ENCODE measurements at regions of chr4 and their contacts with region 1.

Region 1: GRCh38 chr4:81471588-81472288 is at the start of gene RASGEF1B:
- DNase-seq: peak; percentile 96
- H3K4me3 Mint-ChIP-seq: peak within 1 kb of the TSS; percentile 88
- H3K27ac Mint-ChIP-seq: peak within 1 kb of the TSS; percentile 78
- H3K4me1 Mint-ChIP-seq: peaks cover 32% of the 10 kb centered on the region
- H3K27me3 Mint-ChIP-seq: no peaks in the 10 kb centered on the region
- total RNA-seq, gene RASGEF1B: 4.4 to 4.6 TPM

Region 2: GRCh38 chr4:80713409-80713808 is 758.3 kb before region 1 on chr4:
- CTCF ChIA-PET with region 1: no interaction called
- POLR2A ChIA-PET with region 1: no interaction called
- intact Hi-C with region 1: no loop called
- DNase-seq: no peak
- H3K4me3 Mint-ChIP-seq: no peak overlapping the region
- H3K27ac Mint-ChIP-seq: no peak overlapping the region
- H3K4me1 Mint-ChIP-seq: peaks cover 11% of the 10 kb centered on the region
- H3K27me3 Mint-ChIP-seq: no peaks in the 10 kb centered on the region

Region 3: DNA sequence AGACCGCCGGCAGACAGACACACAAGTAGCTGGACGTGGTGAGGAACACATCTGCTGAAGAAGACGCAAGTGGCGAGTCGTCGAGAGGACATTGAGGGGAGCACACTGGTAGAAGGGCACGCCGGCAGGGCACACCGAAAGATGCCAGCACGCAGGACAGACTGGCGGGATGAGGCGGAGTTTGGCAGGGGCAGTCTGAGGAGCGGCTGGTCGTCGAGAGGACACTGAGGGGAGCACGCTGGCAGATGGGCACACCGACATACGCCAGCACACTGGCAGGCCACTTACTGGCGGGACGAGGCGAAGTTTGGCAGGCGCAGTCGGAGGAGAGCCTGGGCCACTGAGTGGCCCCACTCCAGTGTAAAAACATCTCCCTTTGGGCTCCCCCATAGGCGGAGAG is 42.1 kb before region 1 on chr4:
- CTCF ChIA-PET with region 1: no interaction called
- POLR2A ChIA-PET with region 1: no interaction called
- intact Hi-C with region 1: no loop called
- DNase-seq: no peak
- H3K4me3 Mint-ChIP-seq: no peak overlapping the region
- H3K27ac Mint-ChIP-seq: no peak overlapping the region
- H3K4me1 Mint-ChIP-seq: no peaks in the 10 kb centered on the region
- H3K27me3 Mint-ChIP-seq: no peaks in the 10 kb centered on the region

Region 4: DNA sequence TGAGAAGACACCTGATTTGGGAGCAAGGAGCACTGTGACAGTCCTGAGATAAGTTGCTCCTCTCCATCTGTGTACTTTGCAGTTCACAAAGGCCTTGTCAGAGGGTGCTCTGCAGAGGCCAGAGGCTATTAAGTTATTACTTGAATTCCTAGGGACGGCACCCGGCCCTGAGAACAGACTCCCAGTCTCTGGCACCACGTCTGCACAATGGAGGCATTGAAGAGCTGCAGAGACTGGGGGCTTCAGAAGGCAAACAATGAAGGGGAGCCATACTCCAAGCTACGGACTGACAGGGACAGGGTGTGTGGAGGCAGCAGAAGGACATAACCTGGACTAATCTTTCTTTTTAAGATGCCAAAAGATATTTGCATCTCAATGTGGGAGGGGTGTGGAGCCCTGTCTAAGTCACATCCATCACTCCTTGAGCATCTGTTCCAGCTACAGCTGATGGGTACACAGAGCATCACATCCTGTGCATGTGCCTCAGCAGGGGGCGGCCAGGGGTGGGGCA is 11.5 kb before region 1 on chr4:
- CTCF ChIA-PET with region 1: interaction called, 13 read pairs
- POLR2A ChIA-PET with region 1: no interaction called
- intact Hi-C with region 1: no loop called
- DNase-seq: no peak
- H3K4me3 Mint-ChIP-seq: no peak overlapping the region
- H3K27ac Mint-ChIP-seq: no peak overlapping the region
- H3K4me1 Mint-ChIP-seq: peaks cover 10% of the 10 kb centered on the region
- H3K27me3 Mint-ChIP-seq: no peaks in the 10 kb centered on the region

Region 5: GRCh38 chr4:81531428-81531827 is 59.7 kb after region 1 on chr4:
- CTCF ChIA-PET with region 1: no interaction called
- POLR2A ChIA-PET with region 1: no interaction called
- intact Hi-C with region 1: no loop called
- DNase-seq: no peak
- H3K4me3 Mint-ChIP-seq: no peak overlapping the region
- H3K27ac Mint-ChIP-seq: no peak overlapping the region
- H3K4me1 Mint-ChIP-seq: no peaks in the 10 kb centered on the region
- H3K27me3 Mint-ChIP-seq: no peaks in the 10 kb centered on the region

Region 6: GRCh38 chr4:81589262-81589661 is 117.5 kb after region 1 on chr4:
- CTCF ChIA-PET with region 1: interaction called, 4 read pairs
- POLR2A ChIA-PET with region 1: no interaction called
- intact Hi-C with region 1: loop called (anchors 2 kb)
- DNase-seq: no peak
- H3K4me3 Mint-ChIP-seq: no peak overlapping the region
- H3K27ac Mint-ChIP-seq: no peak overlapping the region
- H3K4me1 Mint-ChIP-seq: peaks cover 9% of the 10 kb centered on the region
- H3K27me3 Mint-ChIP-seq: no peaks in the 10 kb centered on the region

Region 7: GRCh38 chr4:81724925-81725329 is 253.2 kb after region 1 on chr4:
- CTCF ChIA-PET with region 1: interaction called, 6 read pairs
- POLR2A ChIA-PET with region 1: no interaction called
- intact Hi-C with region 1: loop called (anchors 2 kb)
- DNase-seq: peak; percentile 80
- H3K4me3 Mint-ChIP-seq: no peak overlapping the region
- H3K27ac Mint-ChIP-seq: no peak overlapping the region
- H3K4me1 Mint-ChIP-seq: peaks cover 16% of the 10 kb centered on the region
- H3K27me3 Mint-ChIP-seq: peaks cover 4% of the 10 kb centered on the region

Region 8: GRCh38 chr4:81844717-81845116 is 373.0 kb after region 1 on chr4:
- CTCF ChIA-PET with region 1: interaction called, 183 read pairs
- POLR2A ChIA-PET with region 1: no interaction called
- intact Hi-C with region 1: loop called (anchors 1 kb)
- DNase-seq: peak; percentile 79
- H3K4me3 Mint-ChIP-seq: no peak overlapping the region
- H3K27ac Mint-ChIP-seq: no peak overlapping the region
- H3K4me1 Mint-ChIP-seq: peaks cover 8% of the 10 kb centered on the region
- H3K27me3 Mint-ChIP-seq: peaks cover 2% of the 10 kb centered on the region

Region 9: DNA sequence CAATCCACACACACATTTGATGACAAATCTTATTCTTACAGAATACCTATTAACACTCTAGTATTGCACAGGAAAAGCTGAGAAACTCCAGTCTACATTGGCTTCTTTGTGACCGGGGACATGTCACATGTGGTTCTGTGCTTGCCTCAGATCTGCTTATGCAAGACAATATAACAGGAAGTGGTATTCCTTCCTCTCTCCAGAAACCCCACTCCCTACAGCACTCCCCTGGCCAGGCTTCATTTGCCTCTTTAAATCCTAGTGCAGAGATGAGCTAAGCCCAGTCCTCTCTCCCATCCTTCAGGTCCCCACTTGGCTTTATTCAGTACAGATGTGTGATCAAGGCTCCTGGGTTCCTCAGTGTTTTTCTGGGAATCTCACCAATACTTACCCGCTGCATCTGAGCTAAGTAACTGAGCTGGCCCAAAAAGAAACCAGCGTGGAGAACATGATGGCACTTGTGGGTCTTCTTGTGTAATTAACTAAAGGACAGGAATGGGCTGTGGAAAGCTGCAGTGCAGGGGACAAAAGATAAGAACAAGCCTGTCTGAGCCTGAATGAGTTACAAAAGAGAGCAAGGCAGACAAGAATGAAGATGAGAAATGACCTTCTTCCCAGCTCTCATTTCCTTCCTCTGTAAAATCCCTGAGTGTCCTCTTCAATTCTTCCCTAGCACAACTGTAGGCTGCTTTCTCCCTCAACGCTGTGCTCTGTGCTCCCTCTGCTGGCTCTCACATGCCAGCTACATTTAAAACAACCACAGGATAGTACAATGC is 796.5 kb after region 1 on chr4:
- CTCF ChIA-PET with region 1: interaction called, 17 read pairs
- POLR2A ChIA-PET with region 1: no interaction called
- intact Hi-C with region 1: loop called (anchors 1 kb)
- DNase-seq: peak; percentile 54
- H3K4me3 Mint-ChIP-seq: no peak overlapping the region
- H3K27ac Mint-ChIP-seq: no peak overlapping the region
- H3K4me1 Mint-ChIP-seq: peaks cover 9% of the 10 kb centered on the region
- H3K27me3 Mint-ChIP-seq: peaks cover 3% of the 10 kb centered on the region

Region 10: DNA sequence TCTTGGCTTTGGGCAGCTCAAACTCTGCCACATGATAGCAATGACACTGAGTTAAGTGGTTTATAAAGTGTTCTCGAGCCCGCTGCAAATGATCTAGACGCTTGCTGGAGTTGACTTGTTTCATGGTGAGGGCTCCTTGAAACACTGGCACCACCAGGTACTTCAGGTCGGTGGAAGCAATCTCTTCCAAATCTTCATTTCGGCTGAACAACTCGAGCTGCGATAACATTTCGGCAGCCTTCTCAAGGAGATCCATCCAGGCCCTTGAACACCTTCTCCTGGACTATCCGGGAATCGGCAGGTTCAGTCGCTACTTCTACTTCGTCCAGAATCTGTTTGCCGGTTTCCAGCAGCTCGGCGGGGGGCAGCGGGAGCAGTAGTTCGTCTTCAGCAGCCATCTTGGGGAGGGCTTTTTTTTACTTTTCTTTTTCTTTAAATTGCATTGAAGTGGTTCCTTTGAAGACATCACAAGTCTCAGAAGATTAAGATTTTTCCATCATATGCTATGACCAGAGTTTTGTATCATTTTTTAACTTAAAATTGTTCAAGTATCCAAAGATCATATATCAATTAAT is 930.5 kb after region 1 on chr4:
- CTCF ChIA-PET with region 1: no interaction called
- POLR2A ChIA-PET with region 1: no interaction called
- intact Hi-C with region 1: no loop called
- DNase-seq: no peak
- H3K4me3 Mint-ChIP-seq: no peak overlapping the region
- H3K27ac Mint-ChIP-seq: no peak overlapping the region
- H3K4me1 Mint-ChIP-seq: no peaks in the 10 kb centered on the region
- H3K27me3 Mint-ChIP-seq: peaks cover 5% of the 10 kb centered on the region

Region 11: GRCh38 chr4:82428969-82429727 is 957.4 kb after region 1 on chr4:
- CTCF ChIA-PET with region 1: no interaction called
- POLR2A ChIA-PET with region 1: no interaction called
- intact Hi-C with region 1: loop called (anchors 2 kb)
- DNase-seq: peak; percentile 95
- H3K4me3 Mint-ChIP-seq: peak overlapping the region; percentile 99
- H3K27ac Mint-ChIP-seq: peak overlapping the region; percentile 97
- H3K4me1 Mint-ChIP-seq: peaks cover 60% of the 10 kb centered on the region
- H3K27me3 Mint-ChIP-seq: no peaks in the 10 kb centered on the region